IMR-90 (cell line): ENCODE measurements at regions of chr11 and their contacts with region 1.

Region 1: DNA sequence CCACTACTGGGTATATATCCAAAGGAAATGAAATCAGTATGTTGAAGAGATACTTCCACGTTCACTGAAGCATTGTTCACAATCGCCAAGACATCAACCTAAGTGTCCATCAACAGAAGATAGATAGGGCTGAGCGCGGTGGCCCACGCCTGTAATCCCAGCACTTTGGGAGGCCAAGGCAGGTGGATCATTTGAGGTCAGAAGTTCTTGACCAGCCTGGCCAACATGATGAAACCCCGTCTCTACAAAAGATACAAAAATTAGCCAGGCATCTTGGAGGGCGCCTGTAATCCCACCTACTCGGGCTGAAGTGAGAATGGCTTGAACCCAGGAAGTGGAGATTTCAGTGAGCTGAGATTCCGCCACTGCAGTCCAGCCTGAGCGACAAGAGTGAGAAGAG is 12.7 kb downstream of the EIF3F start:
- DNase-seq: no peak
- ATAC-seq: no peak
- H3K4me3 ChIP-seq: no peak overlapping the region
- H3K27ac ChIP-seq: no peak overlapping the region
- H3K4me1 ChIP-seq: no peaks in the 10 kb centered on the region
- H3K27me3 ChIP-seq: no peaks in the 10 kb centered on the region
- CTCF ChIP-seq: no peak
- POLR2A ChIP-seq: no peak
- RAD21 ChIP-seq: no peak

Region 2: DNA sequence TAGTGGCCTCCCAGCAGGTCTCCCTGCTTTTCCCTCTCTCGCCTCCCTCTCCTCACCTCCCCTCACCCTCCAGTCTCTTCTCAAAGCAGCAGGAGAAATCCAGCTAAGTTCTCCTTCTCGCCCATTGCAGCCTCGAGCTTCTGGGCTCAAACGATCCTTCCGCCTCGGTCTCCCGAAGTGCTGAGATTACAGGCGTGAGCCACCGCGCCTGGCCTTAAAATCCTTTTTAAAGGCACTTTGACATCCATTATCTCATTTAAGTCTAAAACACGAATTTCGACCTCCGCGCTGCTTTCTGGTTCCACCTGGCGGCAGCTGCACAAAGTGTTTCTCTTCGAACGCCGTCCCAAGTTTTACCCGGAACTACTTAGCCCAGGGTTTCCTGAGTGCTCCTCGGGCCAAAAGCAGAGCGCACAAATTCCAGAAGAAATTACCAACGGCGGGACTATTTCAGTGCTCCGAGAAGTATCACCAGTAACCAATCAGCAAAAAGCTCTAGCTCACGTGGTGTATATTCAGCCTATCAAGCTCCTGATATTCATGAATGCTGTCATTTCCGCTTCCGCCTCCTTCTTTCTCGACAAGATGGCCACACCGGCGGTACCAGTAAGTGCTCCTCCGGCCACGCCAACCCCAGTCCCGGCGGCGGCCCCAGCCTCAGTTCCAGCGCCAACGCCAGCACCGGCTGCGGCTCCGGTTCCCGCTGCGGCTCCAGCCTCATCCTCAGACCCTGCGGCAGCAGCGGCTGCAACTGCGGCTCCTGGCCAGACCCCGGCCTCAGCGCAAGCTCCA is 12.8 kb before region 1 on chr11 and contains the start of gene EIF3F:
- CTCF ChIA-PET with region 1: interaction called, 10 read pairs
- POLR2A ChIA-PET with region 1: interaction called, 3 read pairs
- dilution Hi-C with region 1: no loop called
- in situ Hi-C with region 1: no loop called
- intact Hi-C with region 1: no loop called
- DNase-seq: peak; percentile 100
- ATAC-seq: peak; percentile 98
- H3K4me3 ChIP-seq: peak within 1 kb of the TSS; percentile 97
- H3K27ac ChIP-seq: peak within 1 kb of the TSS; percentile 81
- H3K4me1 ChIP-seq: peaks cover 7% of the 10 kb centered on the region
- H3K27me3 ChIP-seq: no peaks in the 10 kb centered on the region
- CTCF ChIP-seq: peak; percentile 96
- POLR2A ChIP-seq: 0 out of 2 replicates have a peak, but pooled peaks have one; percentile 13
- RAD21 ChIP-seq: peak; percentile 93
- total RNA-seq, gene EIF3F: 279 and 308 TPM in 2 replicates